Ascending aorta (tissue), 2 donors: ENCODE measurements at regions of chr9 and their contacts with region 1.

Region 1: DNA sequence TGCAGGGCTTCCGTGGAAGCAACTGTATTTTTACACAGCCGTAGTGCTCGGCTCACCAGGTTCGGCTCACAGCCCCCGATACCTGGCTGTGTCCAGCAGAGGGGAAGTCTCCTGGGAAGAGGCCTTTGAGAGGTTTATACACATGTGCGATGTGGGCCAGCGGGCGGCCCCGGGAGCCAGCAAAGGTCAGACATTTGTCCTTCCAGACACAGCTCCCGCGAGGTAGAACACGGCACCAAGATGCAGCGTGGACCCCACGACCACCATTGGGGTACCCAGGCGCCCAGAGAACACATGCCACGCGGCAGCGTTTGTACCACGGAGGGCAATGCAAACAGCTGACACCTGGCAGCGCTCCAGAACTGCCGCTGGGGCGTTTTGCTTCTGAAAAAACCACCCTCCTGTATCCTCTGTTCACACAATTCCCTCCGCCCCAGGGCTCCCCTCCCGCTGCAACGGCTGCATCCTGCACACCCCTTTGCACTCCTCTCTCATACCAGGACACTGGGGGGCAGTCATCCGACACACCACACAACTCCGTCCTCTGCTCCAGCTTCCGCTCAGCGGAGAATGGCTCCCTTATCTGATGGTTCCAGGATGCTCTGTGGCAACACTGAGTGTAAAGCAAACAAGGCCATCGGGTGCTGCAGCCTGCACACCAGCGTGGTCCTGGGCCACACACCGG is 235.3 kb downstream of the SYK start:
- DNase-seq: peak; percentile 56 to 90
- H3K4me3 ChIP-seq: peak overlapping the region in 1 of 2 donors; percentile 34
- H3K27ac ChIP-seq: peak overlapping the region; percentile 30 to 59
- H3K4me1 ChIP-seq: peaks cover 10 to 18% of the 10 kb centered on the region in 2 donors
- H3K27me3 ChIP-seq: no peaks in the 10 kb centered on the region
- CTCF ChIP-seq: peak; percentile 60 to 65 (median 64)

Region 2: GRCh38 chr9:90921111-90921510 is 115.9 kb before region 1 on chr9:
- intact Hi-C with region 1: loop called (anchors 2 kb)
- DNase-seq: peak; percentile 70 to 95
- H3K4me3 ChIP-seq: no peak overlapping the region
- H3K27ac ChIP-seq: peak overlapping the region; percentile 77 to 80
- H3K4me1 ChIP-seq: peaks cover 6 to 25% of the 10 kb centered on the region in 2 donors
- H3K27me3 ChIP-seq: no peaks in the 10 kb centered on the region
- CTCF ChIP-seq: no peak

Region 3: DNA sequence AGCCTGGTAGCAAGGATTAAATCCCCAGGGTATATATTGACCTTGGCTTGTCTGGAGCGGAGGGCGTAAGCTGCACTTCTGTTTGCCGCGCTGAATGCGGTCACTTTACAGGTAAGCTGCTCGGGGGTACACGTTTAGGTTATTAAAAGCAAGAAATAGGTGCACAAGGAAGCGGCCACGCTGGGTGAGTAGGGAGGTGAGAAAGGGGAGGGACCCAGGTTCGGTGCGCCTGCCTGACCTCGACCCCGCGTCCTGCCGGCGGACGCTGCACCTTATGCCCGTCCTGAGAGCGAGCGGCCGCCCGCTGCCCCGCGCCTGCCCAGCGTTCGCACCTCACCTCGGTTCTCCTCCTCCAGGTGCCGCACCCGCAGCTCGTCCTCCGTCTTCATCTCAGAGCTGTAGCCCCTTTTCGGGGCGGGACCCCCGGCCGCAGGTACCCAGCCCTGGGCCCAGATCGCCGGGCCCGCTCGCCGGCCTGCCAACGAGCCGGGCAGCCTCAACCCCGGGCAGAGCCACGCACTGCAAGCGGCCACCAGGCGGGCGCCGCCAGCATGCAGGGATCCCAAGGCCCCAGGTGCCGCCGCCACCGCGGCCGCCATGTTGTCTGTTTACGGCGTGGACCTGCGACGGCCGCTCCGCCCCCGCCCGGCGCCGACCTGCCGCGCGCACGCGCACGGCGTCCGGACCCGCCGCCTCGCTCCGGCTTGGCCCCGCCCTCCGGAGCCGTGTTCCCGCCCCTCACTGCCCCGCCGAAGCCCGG is 324.5 kb after region 1 on chr9 and contains the start of gene AUH:
- intact Hi-C with region 1: loop called (anchors 1 kb)
- DNase-seq: peak; percentile 38 to 89
- H3K4me3 ChIP-seq: peak within 1 kb of the TSS; percentile 89 to 96
- H3K27ac ChIP-seq: peak within 1 kb of the TSS; percentile 86 to 88
- H3K4me1 ChIP-seq: peaks cover 0 to 7% of the 10 kb centered on the region in 2 donors
- H3K27me3 ChIP-seq: no peaks in the 10 kb centered on the region
- CTCF ChIP-seq: no peak
- total RNA-seq, gene AUH: 46.2 TPM

Region 4: GRCh38 chr9:91433180-91433579 is 396.2 kb after region 1 on chr9:
- intact Hi-C with region 1: loop called (anchors 2 kb)
- DNase-seq: no peak
- H3K4me3 ChIP-seq: no peak overlapping the region
- H3K27ac ChIP-seq: no peak overlapping the region
- H3K4me1 ChIP-seq: no peaks in the 10 kb centered on the region
- H3K27me3 ChIP-seq: no peaks in the 10 kb centered on the region
- CTCF ChIP-seq: peak; percentile 55 to 65 (median 58)